ENCODE measurements at regions of chr10 and their contacts with region 1.

Region 1: DNA sequence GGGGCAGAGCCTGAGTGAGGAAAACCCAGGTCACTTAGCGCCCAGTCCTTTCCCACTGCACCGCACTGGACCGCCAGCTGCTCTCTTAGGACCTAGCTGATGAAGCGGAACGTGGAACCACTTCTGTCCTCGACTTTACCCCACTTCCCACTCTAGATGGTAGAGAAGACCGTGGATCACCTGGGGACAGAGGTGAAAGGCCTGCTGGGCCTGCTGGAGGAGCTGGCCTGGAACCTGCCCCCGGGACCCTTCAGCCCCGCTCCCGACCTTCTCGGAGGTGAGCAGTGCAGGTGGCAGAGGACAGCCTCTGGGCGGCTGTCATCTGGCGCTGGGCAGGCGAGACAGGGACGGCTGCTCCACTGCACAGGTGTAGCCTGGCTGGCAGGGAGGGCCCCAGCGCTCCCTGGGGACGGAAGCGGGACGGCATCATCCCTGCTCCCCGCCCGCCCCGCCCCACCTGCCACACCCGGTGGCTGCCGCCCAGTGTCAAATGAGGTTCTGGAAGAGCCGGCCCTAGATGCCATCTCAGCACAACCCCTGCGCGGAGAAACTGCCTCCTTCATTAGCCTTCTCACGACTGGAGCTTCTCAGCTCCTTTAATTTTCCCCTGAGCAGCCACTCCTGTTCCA is 11.7 kb downstream of the PLAC9 start:
- DNase-seq: peak; percentile 59
- CTCF ChIP-seq: no peak

Region 2: DNA sequence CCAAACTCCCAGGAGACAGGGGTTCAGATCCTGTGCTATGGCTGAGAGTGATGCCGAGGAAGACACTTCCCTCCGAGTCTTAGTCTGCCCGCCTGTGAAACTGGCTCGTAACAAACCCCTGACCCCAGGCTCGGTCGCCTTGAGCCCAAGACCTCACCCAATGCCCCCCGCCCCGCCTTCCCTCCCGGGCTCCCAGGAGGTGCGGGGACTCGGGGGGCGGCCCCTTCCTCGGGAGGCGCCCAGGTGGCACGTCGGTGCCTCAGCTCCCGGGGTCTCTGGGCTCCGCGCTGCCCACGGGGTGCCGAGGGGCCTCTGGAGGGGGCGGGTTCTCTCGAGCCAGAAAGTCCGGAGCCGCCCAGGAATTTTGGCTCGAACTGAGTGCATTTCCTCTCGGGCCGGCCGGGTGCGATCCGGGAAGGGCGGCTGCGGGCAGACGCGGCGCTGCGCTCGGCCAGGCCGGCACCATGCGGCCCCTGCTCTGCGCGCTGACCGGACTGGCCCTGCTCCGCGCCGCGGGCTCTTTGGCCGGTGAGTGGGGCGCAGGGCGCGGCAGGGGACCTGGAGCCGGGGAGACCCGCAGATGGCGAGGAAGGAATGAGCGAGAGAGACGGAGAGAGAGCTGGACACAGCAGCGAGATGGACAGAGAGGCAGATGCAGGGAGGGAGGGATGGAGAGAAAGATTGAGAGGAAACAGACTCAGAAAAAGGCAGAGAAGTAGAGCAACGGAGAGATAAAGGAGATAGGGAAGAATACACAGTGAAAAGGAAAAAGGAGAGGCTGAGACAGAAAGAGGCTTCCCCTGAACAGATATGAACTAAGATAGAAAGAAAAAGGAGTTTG is 11.7 kb before region 1 on chr10 and contains the start of gene PLAC9:
- CTCF ChIA-PET with region 1: interaction called, 12 read pairs
- POLR2A ChIA-PET with region 1: no interaction called
- DNase-seq: no peak
- CTCF ChIP-seq: no peak

Region 3: GRCh38 chr10:80161331-80162083 is 17.3 kb after region 1 on chr10:
- CTCF ChIA-PET with region 1: interaction called, 11 read pairs
- POLR2A ChIA-PET with region 1: no interaction called
- DNase-seq: no peak
- CTCF ChIP-seq: no peak

Region 4: GRCh38 chr10:80202934-80203834 is 59.0 kb after region 1 on chr10:
- CTCF ChIA-PET with region 1: interaction called, 15 read pairs
- POLR2A ChIA-PET with region 1: interaction called, 7 read pairs
- DNase-seq: peak; percentile 77
- CTCF ChIP-seq: peak; percentile 71

Region 5: GRCh38 chr10:80253266-80254245 is 109.4 kb after region 1 on chr10:
- CTCF ChIA-PET with region 1: interaction called, 43 read pairs
- POLR2A ChIA-PET with region 1: no interaction called
- DNase-seq: peak; percentile 18
- CTCF ChIP-seq: no peak

Measured in GM10248 (cell line).